ENCODE measurements at regions of chr6 and their contacts with region 1.

Region 1: DNA sequence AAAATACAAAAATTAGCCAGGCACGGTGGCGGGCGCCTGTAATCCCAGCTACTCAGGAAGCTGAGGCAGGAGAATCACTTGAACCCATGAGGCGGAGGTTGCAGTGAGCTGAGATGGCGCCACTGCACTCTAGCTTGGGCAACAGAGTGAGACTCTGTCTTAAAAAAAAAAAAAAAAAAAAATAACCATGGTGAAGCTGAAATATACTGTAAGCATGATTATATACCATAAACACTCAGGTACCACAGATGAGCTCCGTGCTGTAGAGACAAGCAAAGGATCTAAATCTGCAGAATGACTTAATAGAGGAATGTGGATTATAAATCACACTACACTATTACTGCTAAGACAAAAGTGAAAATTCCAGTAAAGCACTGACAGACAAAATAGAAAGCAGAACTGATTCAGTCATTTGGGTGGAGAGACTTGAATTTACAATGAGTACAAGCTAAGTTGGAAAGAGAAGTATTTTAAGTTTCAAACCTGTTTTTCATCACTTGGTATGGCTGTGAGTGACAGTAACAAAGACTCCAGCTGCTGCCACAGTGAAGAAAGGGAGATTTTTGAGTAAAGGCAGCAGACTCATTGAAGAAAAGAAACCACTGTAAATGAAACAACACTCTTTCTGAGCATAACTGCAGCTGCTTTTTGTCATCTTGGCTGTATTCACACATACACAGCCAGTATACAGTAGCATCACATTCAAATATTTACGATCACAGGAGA is 322.1 kb downstream of the RNGTT start:
- DNase-seq: no peak
- H3K4me3 ChIP-seq: no peak overlapping the region
- H3K27ac ChIP-seq: no peak overlapping the region
- H3K4me1 ChIP-seq: no peaks in the 10 kb centered on the region
- H3K27me3 ChIP-seq: no peaks in the 10 kb centered on the region
- CTCF ChIP-seq: no peak
- POLR2A ChIP-seq: no peak

Region 2: GRCh38 chr6:87220997-87221396 is 1420.3 kb before region 1 on chr6:
- intact Hi-C with region 1: no loop called
- DNase-seq: no peak
- H3K4me3 ChIP-seq: no peak overlapping the region
- H3K27ac ChIP-seq: no peak overlapping the region
- H3K4me1 ChIP-seq: no peaks in the 10 kb centered on the region
- H3K27me3 ChIP-seq: no peaks in the 10 kb centered on the region
- CTCF ChIP-seq: no peak
- POLR2A ChIP-seq: no peak

Region 3: DNA sequence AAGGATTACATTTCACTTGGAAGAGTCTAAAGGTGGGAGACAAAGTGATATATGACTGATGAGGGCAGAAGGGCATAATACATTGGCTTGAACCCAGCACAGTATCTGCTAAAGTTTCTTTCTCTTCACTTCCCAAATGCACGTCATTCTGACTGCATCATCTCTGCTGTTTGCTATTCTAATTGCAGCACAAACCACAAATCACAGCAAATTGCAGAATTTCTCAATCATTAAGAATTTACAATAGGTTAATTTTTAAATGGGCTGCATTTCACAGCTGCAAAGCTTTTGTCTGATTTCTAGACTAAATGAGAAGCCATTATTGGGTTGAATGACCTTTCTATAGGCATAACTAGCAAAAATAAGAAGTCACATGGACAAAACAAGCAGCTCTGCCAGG is 14.9 kb before region 1 on chr6:
- intact Hi-C with region 1: loop called (anchors 1 kb)
- DNase-seq: no peak
- H3K4me3 ChIP-seq: no peak overlapping the region
- H3K27ac ChIP-seq: no peak overlapping the region
- H3K4me1 ChIP-seq: no peaks in the 10 kb centered on the region
- H3K27me3 ChIP-seq: no peaks in the 10 kb centered on the region
- CTCF ChIP-seq: no peak
- POLR2A ChIP-seq: no peak